Naive thymus-derived CD4-positive, alpha-beta T cell (primary cell): ENCODE measurements at regions of chr7 and their contacts with region 1.

Region 1: GRCh38 chr7:105346593-105347322 is 42.0 kb downstream of the SRPK2 start:
- DNase-seq: peak in 4 of 9 donors; percentile 10 to 52 (median 24)
- ATAC-seq: peak; percentile 80
- H3K4me3 ChIP-seq: no peak overlapping the region
- H3K4me3 Mint-ChIP-seq: peak overlapping the region; percentile 40 to 75 (median 62)
- H3K27ac ChIP-seq: no peak overlapping the region
- H3K27ac Mint-ChIP-seq: peak overlapping the region in 8 of 9 donors; percentile 44 to 90 (median 67)
- H3K4me1 ChIP-seq: peaks cover 38 to 64% of the 10 kb centered on the region in 2 donors
- H3K4me1 Mint-ChIP-seq: peaks cover 42 to 79% (median 57%) of the 10 kb centered on the region in 7 donors
- H3K27me3 ChIP-seq: no peaks in the 10 kb centered on the region
- H3K27me3 Mint-ChIP-seq: no peaks in the 10 kb centered on the region

Region 2: DNA sequence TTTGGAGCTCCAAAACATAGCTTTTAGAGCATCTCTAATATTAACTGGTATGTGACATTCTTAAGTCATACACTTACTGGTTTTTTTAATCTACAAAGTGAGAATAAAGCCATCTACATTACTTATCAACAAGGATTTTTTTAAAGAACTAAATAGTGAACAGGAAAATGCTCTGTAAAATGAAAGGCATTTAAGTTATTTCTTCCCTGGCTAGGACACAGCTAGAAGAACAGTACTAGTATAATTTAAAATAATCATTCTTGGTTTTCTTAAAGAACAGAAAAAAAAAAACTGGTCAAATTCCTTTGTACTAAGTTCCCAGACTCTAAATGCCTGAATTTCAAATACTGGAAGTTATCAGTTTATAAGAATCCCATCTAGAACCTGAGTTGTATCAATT is 97.5 kb before region 1 on chr7:
- CTCF ChIA-PET with region 1: no interaction called
- POLR2A ChIA-PET with region 1: no interaction called
- intact Hi-C with region 1: no loop called
- DNase-seq: no peak
- ATAC-seq: no peak
- H3K4me3 ChIP-seq: no peak overlapping the region
- H3K4me3 Mint-ChIP-seq: no peak overlapping the region
- H3K27ac ChIP-seq: no peak overlapping the region
- H3K27ac Mint-ChIP-seq: no peak overlapping the region
- H3K4me1 ChIP-seq: no peaks in the 10 kb centered on the region
- H3K4me1 Mint-ChIP-seq: peaks cover 22 to 49% (median 42%) of the 10 kb centered on the region in 7 donors
- H3K27me3 ChIP-seq: no peaks in the 10 kb centered on the region
- H3K27me3 Mint-ChIP-seq: no peaks in the 10 kb centered on the region

Region 3: GRCh38 chr7:105298439-105298907 is 48.3 kb before region 1 on chr7:
- CTCF ChIA-PET with region 1: no interaction called
- POLR2A ChIA-PET with region 1: no interaction called
- intact Hi-C with region 1: loop called in 1 of 2 experiments (anchors 5 kb)
- DNase-seq: peak in 1 of 9 donors; percentile 23
- ATAC-seq: peak; percentile 42
- H3K4me3 ChIP-seq: no peak overlapping the region
- H3K4me3 Mint-ChIP-seq: peak overlapping the region in 5 of 10 donors; percentile 18 to 43 (median 26)
- H3K27ac ChIP-seq: no peak overlapping the region
- H3K27ac Mint-ChIP-seq: peak overlapping the region in 5 of 9 donors; percentile 25 to 89 (median 66)
- H3K4me1 ChIP-seq: peaks cover 4 to 13% of the 10 kb centered on the region in 2 donors
- H3K4me1 Mint-ChIP-seq: peaks cover 34 to 65% (median 52%) of the 10 kb centered on the region in 7 donors
- H3K27me3 ChIP-seq: no peaks in the 10 kb centered on the region
- H3K27me3 Mint-ChIP-seq: no peaks in the 10 kb centered on the region

Region 4: DNA sequence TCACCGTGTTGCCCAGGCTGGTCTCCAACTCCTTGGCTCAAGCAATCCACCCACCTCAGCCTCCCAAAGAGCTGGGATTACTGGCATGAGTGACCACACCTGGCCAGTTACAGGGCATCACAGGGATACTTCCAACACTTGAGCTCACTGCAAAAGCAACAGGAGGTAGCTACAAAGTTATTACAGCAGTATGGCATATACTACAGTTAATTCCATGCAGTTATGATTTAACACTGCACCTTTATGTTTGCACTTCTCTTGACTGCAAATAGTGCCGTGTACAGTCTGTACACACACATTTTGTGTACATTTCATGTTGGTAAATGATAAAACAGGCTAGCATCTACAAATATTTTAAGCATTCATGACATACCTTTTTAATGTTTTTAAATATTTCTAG is 20.7 kb after region 1 on chr7:
- CTCF ChIA-PET with region 1: no interaction called
- POLR2A ChIA-PET with region 1: no interaction called
- intact Hi-C with region 1: no loop called
- DNase-seq: no peak
- ATAC-seq: no peak
- H3K4me3 ChIP-seq: no peak overlapping the region
- H3K4me3 Mint-ChIP-seq: no peak overlapping the region
- H3K27ac ChIP-seq: no peak overlapping the region
- H3K27ac Mint-ChIP-seq: peak overlapping the region in 2 of 9 donors; percentile 31 to 46
- H3K4me1 ChIP-seq: peaks cover 10 to 11% of the 10 kb centered on the region in 2 donors
- H3K4me1 Mint-ChIP-seq: peaks cover 10 to 66% (median 46%) of the 10 kb centered on the region in 7 donors
- H3K27me3 ChIP-seq: no peaks in the 10 kb centered on the region
- H3K27me3 Mint-ChIP-seq: no peaks in the 10 kb centered on the region

Region 5: GRCh38 chr7:106671160-106671559 is 1324.4 kb after region 1 on chr7:
- CTCF ChIA-PET with region 1: no interaction called
- POLR2A ChIA-PET with region 1: no interaction called
- intact Hi-C with region 1: loop called in 1 of 2 experiments (anchors 5 kb)
- DNase-seq: no peak
- ATAC-seq: no peak
- H3K4me3 ChIP-seq: no peak overlapping the region
- H3K4me3 Mint-ChIP-seq: no peak overlapping the region
- H3K27ac ChIP-seq: no peak overlapping the region
- H3K27ac Mint-ChIP-seq: no peak overlapping the region
- H3K4me1 ChIP-seq: no peaks in the 10 kb centered on the region
- H3K4me1 Mint-ChIP-seq: peaks cover 0 to 2% (median 0%) of the 10 kb centered on the region in 7 donors
- H3K27me3 ChIP-seq: no peaks in the 10 kb centered on the region
- H3K27me3 Mint-ChIP-seq: peaks cover 0 to 5% (median 0%) of the 10 kb centered on the region in 5 donors